Activated CD4-positive, alpha-beta memory T cell treated with anti-CD3 and anti-CD28 coated beads, Interleukin-2, amount 10 ng/mL, durations not matched to agents 7 days and 5 days (primary cell): ENCODE measurements at regions of chr7 and their contacts with region 1.

Region 1: DNA sequence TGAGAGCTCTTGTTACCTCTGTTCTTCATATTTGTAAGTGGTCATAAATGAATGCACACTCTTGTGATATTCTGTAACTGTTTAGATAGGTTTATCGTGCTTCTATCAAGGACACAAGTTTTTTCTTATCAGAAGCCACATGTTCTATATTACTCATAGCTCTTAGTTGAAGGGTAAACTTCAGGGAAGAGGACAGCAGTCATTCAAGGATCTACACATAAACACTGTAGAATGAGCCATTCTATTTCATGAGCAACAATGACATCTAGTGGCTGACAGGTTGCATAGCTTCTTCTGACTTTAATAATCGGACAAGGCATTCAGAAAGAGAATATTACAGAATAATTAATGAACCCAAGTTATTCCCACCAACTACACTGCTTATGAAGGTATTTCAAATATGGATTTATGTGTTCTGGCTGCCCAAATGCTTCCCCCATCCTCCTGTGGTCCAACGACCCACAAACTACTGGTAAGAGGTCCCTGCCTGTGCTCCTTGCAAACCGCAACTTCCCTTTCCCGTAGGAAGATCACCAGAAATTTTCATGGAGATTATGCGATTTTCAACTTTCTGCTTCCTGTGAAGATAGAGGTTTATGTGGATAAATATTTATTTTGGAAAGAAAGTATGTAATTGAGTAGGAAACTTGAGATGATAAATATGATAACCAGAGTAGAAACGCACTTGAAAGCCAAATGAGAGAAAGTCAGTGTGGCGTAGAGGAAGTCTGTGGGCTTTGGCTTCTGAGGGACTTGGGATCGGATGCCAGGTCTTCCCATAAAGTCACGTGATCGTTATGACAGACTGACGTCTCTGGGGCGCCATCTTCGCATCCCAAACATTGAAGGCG is 16.8 kb upstream of the ABCB5 start:
- DNase-seq: no peak
- H3K4me3 Mint-ChIP-seq: no peak overlapping the region
- H3K27ac Mint-ChIP-seq: no peak overlapping the region
- H3K4me1 Mint-ChIP-seq: no peaks in the 10 kb centered on the region
- H3K27me3 Mint-ChIP-seq: peaks cover 5% of the 10 kb centered on the region

Region 2: DNA sequence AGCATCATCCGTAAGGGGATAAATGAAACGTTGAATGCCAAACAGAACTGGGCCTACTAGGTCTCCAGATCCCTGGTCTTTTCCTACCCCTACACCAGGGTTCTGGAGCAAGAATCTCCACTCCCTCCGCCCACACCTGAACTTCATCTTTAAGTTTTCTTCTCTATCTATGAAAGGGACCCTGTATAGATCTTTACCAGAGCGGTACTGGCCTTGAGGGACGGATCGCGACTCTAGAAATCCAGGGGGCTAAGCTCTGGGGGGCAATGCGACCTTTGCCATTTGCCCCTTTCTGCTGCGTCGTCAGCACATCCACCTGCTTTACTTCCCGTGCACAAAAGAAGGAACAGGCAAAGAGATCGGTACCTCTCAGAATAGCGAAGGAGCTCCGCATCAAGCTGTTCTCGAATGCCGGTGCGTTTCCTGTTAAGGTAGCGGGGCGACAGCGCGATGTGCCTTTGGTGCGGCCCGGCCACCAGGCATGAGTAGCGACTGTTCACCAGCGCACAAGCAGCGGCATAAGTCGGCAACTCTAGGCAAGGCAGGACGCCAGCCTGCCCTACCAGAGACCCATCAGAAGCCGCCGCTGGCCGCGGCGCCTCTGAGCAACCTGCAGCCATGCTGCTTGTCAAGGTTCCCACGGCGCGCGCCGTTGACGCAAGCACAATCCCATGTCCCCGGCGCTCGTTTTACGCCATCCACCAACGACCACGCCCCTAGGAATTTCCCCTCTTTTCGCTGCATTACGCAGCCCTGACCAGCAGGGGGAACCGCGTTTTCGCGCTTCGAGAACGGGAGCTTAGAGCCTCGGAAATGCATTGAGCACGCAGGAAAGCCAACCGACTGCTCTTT is 890.1 kb before region 1 on chr7 and contains the start of gene POLR1F:
- CTCF ChIA-PET with region 1: interaction called, 33 read pairs
- POLR2A ChIA-PET with region 1: no interaction called
- DNase-seq: peak; percentile 93
- H3K4me3 Mint-ChIP-seq: peak within 1 kb of the TSS; percentile 94
- H3K27ac Mint-ChIP-seq: peak within 1 kb of the TSS; percentile 71
- H3K4me1 Mint-ChIP-seq: peaks cover 37% of the 10 kb centered on the region
- H3K27me3 Mint-ChIP-seq: peaks cover 5% of the 10 kb centered on the region
- total RNA-seq, gene POLR1F: 17.0 to 17.3 TPM

Region 3: GRCh38 chr7:19713676-19714075 is 885.0 kb before region 1 on chr7:
- CTCF ChIA-PET with region 1: interaction called, 33 read pairs
- POLR2A ChIA-PET with region 1: no interaction called
- DNase-seq: peak; percentile 35
- H3K4me3 Mint-ChIP-seq: no peak overlapping the region
- H3K27ac Mint-ChIP-seq: no peak overlapping the region
- H3K4me1 Mint-ChIP-seq: peaks cover 11% of the 10 kb centered on the region
- H3K27me3 Mint-ChIP-seq: peaks cover 8% of the 10 kb centered on the region

Region 4: DNA sequence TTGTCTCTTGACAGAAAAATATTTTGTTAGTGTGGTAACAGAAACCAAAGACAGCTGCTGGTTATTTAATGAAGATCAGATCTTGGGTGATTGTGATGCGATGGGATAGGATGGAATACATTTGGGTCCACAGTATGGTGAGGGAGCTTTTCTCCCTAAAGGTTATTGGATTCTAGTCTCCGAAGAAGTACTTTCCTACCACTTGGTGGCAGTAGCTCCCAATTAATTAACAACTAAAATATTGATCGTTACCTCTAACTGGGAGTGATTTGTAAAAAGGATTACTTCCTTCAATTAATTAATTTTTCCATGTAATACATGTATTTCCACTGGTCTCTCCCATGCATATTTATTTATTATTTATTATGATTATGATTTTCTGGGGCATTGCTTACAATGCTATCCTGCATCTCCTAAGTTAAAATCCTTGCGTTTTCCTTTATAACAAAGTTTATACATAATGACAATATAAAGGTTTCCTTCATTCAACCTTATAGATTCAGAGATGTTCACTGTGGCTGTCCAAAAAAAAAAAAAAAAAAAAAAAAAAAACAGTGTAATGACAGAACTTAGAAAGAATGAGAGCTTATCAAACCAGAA is 850.8 kb before region 1 on chr7:
- CTCF ChIA-PET with region 1: interaction called, 10 read pairs
- POLR2A ChIA-PET with region 1: no interaction called
- DNase-seq: no peak
- H3K4me3 Mint-ChIP-seq: no peak overlapping the region
- H3K27ac Mint-ChIP-seq: no peak overlapping the region
- H3K4me1 Mint-ChIP-seq: no peaks in the 10 kb centered on the region
- H3K27me3 Mint-ChIP-seq: peaks cover 2% of the 10 kb centered on the region

Region 5: DNA sequence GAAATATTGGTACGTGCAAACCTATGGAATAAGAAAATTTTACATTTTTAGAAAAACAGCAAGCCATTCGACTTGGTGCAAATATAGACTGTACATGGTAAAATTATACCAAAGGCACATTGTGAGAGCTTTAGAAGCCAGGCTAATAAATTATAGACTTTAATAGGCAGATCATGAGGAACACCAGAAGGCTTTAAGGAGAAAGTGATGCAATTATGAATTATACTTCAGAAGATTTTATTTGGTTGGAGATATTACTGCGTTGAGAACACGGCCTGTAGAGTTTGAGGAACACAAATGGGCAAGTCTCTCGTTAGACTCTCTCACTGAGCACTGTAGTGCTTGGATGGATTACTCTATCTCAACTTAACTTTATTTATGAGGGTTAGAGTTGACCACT is 523.2 kb before region 1 on chr7:
- CTCF ChIA-PET with region 1: no interaction called
- POLR2A ChIA-PET with region 1: no interaction called
- DNase-seq: no peak
- H3K4me3 Mint-ChIP-seq: no peak overlapping the region
- H3K27ac Mint-ChIP-seq: no peak overlapping the region
- H3K4me1 Mint-ChIP-seq: no peaks in the 10 kb centered on the region
- H3K27me3 Mint-ChIP-seq: no peaks in the 10 kb centered on the region